Breast epithelium (tissue), 4 donors: ENCODE measurements at regions of chr13 and their contacts with region 1.

Region 1: GRCh38 chr13:20359335-20359734 is 127.2 kb upstream of the GJB6 start:
- DNase-seq: no peak
- H3K4me3 ChIP-seq: no peak overlapping the region
- H3K27ac ChIP-seq: no peak overlapping the region
- H3K4me1 ChIP-seq: no peaks in the 10 kb centered on the region
- H3K27me3 ChIP-seq: no peaks in the 10 kb centered on the region
- CTCF ChIP-seq: no peak
- POLR2A ChIP-seq: no peak

Region 2: GRCh38 chr13:20847296-20847695 is 488.0 kb after region 1 on chr13:
- intact Hi-C with region 1: no loop called
- DNase-seq: no peak
- H3K4me3 ChIP-seq: no peak overlapping the region
- H3K27ac ChIP-seq: no peak overlapping the region
- H3K4me1 ChIP-seq: no peaks in the 10 kb centered on the region
- H3K27me3 ChIP-seq: no peaks in the 10 kb centered on the region
- CTCF ChIP-seq: no peak
- POLR2A ChIP-seq: no peak

Region 3: DNA sequence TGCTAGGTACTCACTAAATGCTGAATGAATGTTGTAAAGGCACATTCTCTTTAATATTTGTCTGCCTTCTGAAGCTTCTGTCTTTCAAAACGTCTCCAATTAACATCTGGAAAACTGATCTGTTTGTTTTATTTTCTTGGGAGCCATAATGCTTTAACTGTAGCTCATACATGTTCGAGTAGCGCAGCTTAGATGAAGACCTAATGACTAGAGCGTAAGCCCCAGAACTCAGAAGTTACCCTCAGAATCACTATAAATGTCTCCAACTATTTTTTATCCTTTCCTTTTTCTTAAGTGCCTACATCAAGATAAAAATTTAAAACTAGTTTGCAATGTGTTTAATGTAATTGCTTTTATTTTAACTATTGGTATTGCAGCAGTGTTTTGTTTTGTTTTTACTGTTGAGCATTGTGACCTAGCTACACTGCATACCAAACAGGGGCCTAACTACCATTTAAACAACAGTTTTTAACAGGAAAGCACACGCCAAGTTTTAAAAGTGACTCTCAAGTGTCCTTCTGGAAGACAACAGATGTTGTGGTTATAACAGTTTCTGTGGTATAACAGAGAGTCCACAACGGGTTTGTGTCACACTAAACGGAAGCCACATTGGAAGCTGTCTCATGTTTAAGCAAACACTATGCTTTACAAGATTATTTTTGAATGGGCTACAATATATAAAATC is 859.2 kb after region 1 on chr13:
- intact Hi-C with region 1: no loop called
- DNase-seq: no peak
- H3K4me3 ChIP-seq: no peak overlapping the region
- H3K27ac ChIP-seq: no peak overlapping the region
- H3K4me1 ChIP-seq: no peaks in the 10 kb centered on the region
- H3K27me3 ChIP-seq: no peaks in the 10 kb centered on the region
- CTCF ChIP-seq: no peak
- POLR2A ChIP-seq: no peak

Region 4: DNA sequence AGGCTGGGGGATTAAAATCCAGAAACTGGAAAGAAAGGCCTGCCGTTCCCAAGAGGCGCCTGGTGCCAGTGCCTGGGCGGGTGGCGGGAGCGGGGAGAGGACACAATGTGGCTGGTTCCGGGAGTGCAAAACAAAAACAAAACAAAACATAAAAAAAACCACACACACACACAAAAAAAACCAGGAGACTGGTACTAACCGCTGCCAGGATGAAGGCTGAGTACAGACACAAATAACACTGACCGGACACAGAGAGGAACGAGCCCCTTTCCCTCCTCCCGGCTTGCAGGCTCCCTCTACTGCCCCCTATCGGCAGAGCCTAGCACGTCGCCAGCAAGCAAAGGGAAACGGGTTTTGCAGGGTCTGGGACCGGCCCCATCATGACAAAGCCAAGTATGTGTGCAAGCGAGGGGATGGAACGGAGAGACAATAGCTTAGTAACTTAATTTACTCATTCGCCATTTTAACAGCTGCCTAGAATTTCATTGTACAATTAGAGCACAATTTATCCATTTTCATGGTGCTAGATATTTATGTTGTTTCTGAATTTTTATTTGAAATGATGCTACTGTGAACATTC is 1117.6 kb after region 1 on chr13:
- intact Hi-C with region 1: loop called (anchors 5 kb)
- DNase-seq: peak; percentile 63 to 79
- H3K4me3 ChIP-seq: peak overlapping the region; percentile 37 to 53 (median 42)
- H3K27ac ChIP-seq: no peak overlapping the region
- H3K4me1 ChIP-seq: no peaks in the 10 kb centered on the region
- H3K27me3 ChIP-seq: no peaks in the 10 kb centered on the region
- CTCF ChIP-seq: peak; percentile 89 to 91 (median 90)
- POLR2A ChIP-seq: no peak